ENCODE measurements at regions of chr17 and their contacts with region 1.

Region 1: DNA sequence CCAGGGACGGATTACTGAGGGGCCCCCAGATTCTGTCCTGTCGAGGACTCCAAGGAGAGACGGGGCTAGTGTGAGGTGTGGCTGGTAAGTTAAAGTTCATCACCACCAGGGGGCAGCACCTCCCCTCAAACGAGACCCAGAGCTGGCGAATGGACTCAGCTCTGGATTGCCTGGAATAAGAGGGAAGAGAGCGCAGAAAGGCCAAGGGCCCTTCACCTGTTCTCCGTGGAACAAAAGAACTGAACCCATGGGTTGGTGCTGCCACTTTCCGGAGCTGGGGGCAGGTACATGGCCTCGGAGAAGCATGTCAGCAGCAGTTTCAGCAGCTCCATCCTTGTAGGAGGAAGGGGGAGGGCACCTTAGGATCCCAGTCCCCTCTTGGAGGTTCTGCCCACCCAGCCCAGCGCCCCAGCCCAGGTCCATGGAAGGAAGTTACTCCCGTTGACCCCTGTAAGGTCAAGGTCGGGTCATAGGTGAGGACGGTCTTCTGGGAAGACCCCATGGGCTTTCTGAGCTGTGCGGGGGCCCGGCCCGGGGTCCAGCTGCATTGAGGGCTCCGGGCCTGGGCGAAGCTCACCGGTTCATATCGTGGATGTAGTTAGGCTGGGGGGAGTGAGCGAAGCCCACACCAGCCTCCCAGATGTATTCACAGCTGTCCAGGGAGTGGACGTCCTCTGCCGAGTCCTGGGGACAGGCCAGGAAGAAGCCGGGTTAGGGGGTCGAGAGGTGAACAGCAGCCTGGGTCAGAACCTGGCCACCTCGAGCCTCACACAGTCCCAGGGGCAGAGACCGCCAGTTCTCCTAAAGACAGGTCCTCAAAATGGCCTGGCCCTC is 10.7 kb downstream of the HID1 start:
- DNase-seq: no peak
- ATAC-seq: peak; percentile 86
- H3K4me3 ChIP-seq: no peak overlapping the region
- H3K27ac ChIP-seq: no peak overlapping the region
- H3K4me1 ChIP-seq: no peaks in the 10 kb centered on the region; the same call in 1 of the 2 replicates
- H3K27me3 ChIP-seq: no peaks in the 10 kb centered on the region
- CTCF ChIP-seq: peak; percentile 62 to 83 (median 72)
- EP300 ChIP-seq: no peak
- POLR2A ChIP-seq: no peak
- RAD21 ChIP-seq: peak; percentile 75

Region 2: DNA sequence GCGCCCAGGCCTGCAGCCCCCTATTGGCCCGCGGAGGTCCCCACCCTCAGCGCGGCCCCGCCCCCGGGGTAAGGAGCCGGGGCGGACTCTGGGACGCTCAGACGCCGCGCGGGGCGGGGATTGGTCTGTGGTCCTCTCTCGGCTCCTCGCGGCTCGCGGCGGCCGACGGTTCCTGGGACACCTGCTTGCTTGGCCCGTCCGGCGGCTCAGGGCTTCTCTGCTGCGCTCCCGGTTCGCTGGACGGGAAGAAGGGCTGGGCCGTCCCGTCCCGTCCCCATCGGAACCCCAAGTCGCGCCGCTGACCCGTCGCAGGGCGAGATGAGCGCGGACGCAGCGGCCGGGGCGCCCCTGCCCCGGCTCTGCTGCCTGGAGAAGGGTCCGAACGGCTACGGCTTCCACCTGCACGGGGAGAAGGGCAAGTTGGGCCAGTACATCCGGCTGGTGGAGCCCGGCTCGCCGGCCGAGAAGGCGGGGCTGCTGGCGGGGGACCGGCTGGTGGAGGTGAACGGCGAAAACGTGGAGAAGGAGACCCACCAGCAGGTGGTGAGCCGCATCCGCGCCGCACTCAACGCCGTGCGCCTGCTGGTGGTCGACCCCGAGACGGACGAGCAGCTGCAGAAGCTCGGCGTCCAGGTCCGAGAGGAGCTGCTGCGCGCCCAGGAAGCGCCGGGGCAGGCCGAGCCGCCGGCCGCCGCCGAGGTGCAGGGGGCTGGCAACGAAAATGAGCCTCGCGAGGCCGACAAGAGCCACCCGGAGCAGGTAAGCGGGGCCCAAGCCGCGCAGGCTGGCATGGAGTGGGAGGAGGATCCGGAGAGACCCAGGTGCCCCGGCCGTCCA is 213.1 kb before region 1 on chr17 and contains the start of gene NHERF1:
- CTCF ChIA-PET with region 1: interaction called, 26 read pairs
- POLR2A ChIA-PET with region 1: no interaction called
- RAD21 ChIA-PET with region 1: interaction called, 7 read pairs
- SMC1A ChIA-PET with region 1: interaction called, 6 read pairs
- in situ Hi-C with region 1: no loop called
- intact Hi-C with region 1: no loop called
- DNase-seq: peak; percentile 60
- ATAC-seq: peak; percentile 96
- H3K4me3 ChIP-seq: peak within 1 kb of the TSS; percentile 96
- H3K27ac ChIP-seq: peak within 1 kb of the TSS; percentile 64
- H3K4me1 ChIP-seq: peaks cover 6% of the 10 kb centered on the region
- H3K27me3 ChIP-seq: no peaks in the 10 kb centered on the region
- CTCF ChIP-seq: peak; percentile 10 to 19 (median 14); a peak in 1 of 6 replicates
- EP300 ChIP-seq: no peak
- POLR2A ChIP-seq: peak; percentile 99
- RAD21 ChIP-seq: no peak
- polyA plus RNA-seq, gene NHERF1: 13.4 to 14.3 TPM

Region 3: DNA sequence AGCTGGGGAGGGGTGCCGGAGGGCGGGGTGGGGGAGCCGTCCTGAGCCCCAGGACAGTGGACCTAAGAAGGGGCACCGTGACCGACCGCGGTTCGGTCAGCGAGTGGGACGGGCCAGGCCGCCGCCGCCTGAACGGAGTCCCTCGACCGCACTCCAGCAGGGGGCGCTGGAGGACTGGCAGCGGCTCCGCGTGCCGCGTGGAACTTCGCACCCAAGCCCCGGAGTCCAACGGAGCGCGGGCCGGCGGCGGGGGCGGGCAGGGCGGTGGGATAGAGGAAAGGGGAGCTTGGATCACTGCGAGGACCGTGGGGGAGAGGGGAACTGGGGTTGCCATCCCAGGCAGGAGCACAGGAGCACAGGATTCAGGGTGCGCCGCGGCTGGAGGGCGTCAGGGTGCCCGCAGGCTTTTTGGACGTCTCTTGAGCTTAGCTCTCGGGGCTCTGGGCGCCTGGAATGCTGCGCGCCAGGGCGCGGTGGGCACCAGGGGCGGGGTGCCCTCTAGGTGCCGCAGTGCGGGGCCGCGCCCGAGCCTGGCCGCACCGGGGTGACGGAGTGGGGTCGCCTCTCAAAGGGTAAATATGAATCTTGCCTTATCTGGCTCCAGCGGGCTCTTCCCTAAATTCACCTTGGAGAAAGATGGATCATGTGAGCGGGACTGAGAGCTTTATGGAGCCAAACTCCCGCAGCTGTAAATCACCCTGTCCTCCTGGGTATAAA is 38.2 kb before region 1 on chr17:
- CTCF ChIA-PET with region 1: interaction called, 274 read pairs
- POLR2A ChIA-PET with region 1: no interaction called
- RAD21 ChIA-PET with region 1: interaction called, 73 read pairs
- SMC1A ChIA-PET with region 1: interaction called, 73 read pairs
- in situ Hi-C with region 1: loop called (anchors 5 kb)
- intact Hi-C with region 1: loop called (anchors 1 kb)
- DNase-seq: no peak
- ATAC-seq: peak; percentile 88
- H3K4me3 ChIP-seq: no peak overlapping the region
- H3K27ac ChIP-seq: no peak overlapping the region
- H3K4me1 ChIP-seq: no peaks in the 10 kb centered on the region
- H3K27me3 ChIP-seq: peaks cover 11 to 16% of the 10 kb centered on the region in 2 experiments
- CTCF ChIP-seq: peak; percentile 45 to 91 (median 88)
- EP300 ChIP-seq: no peak
- POLR2A ChIP-seq: no peak
- RAD21 ChIP-seq: peak; percentile 84

Region 4: DNA sequence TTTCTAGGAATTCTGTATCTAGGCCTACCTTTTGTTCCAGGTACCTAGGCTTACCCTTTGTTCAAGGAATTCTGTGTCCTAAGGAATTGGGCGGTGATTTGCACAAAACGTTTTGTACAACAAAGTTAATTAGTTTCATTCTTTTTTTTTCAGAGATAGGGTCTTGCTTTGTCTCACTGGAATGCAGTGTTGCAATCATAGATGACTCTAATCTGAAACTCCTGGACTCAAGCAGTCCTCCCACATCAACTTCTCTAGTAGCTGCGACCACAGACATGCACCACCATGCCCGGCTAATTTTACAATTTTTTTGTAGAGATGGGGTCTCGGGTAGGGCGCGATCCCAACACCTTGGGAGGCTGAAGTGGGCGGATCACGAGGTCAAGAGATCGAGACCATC is 32.6 kb after region 1 on chr17:
- CTCF ChIA-PET with region 1: interaction called, 21 read pairs
- POLR2A ChIA-PET with region 1: no interaction called
- RAD21 ChIA-PET with region 1: interaction called, 8 read pairs
- SMC1A ChIA-PET with region 1: interaction called, 7 read pairs
- in situ Hi-C with region 1: no loop called
- intact Hi-C with region 1: no loop called
- DNase-seq: no peak
- ATAC-seq: no peak
- H3K4me3 ChIP-seq: no peak overlapping the region
- H3K27ac ChIP-seq: no peak overlapping the region
- H3K4me1 ChIP-seq: no peaks in the 10 kb centered on the region
- H3K27me3 ChIP-seq: peaks cover 0 to 3% of the 10 kb centered on the region in 2 experiments; a peak in 1 of 4 replicates
- CTCF ChIP-seq: no peak
- EP300 ChIP-seq: no peak
- POLR2A ChIP-seq: no peak
- RAD21 ChIP-seq: no peak

Region 5: DNA sequence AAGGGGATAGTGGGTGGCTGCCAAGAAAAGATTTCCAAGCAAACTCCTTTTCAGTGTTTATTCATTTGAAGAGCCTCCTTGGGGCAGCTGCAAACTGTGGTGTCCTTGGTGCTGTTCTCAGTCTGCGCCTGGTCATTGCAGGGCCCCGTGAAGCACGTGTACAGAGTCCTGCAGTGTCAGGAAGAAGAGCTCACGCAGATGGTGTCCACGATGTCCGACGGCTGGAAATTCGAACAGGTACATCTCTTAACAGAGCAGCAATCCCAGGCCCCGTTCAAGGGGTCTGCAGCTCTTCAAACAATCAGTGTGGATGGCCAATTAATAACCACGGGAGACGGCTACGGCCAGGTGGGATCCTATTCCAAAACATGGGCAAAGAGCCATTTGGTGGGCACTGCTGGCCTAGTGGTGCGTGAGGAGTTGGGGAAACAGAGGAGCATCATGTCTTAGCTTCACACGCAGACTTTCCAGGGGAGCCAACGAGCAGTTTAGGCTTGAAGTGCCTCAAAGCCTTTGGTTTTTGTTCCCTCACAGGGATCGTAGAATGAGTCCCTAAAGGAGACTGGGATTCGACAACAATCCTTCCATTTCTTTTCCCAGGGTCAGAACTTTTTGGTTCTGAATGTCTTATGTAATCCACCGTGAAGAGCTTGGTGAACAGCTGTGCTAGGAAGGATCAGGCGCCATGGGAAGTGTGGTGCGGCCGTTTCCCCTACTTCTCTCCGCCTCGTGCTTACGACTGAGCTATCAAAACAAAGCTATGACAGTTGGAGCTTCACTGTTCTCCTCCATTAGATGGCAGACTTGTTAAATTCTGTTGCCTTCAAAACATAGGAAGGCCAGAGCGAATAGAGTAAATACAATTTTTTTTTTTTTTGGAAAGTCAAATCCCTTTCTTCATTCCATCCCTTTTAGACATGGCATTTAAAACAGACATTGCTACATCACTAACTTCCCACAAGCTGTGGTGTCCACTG is 97.8 kb after region 1 on chr17:
- CTCF ChIA-PET with region 1: interaction called, 23 read pairs
- POLR2A ChIA-PET with region 1: no interaction called
- RAD21 ChIA-PET with region 1: interaction called, 4 read pairs
- SMC1A ChIA-PET with region 1: interaction called, 7 read pairs
- in situ Hi-C with region 1: no loop called
- intact Hi-C with region 1: no loop called
- DNase-seq: no peak
- ATAC-seq: no peak
- H3K4me3 ChIP-seq: no peak overlapping the region
- H3K27ac ChIP-seq: no peak overlapping the region
- H3K4me1 ChIP-seq: no peaks in the 10 kb centered on the region
- H3K27me3 ChIP-seq: no peaks in the 10 kb centered on the region
- CTCF ChIP-seq: peak in 2 of 3 experiments; percentile 19 to 34; a peak in 2 of 6 replicates
- EP300 ChIP-seq: no peak
- POLR2A ChIP-seq: no peak
- RAD21 ChIP-seq: peak; percentile 38; the same call in 1 of the 2 replicates

Region 6: GRCh38 chr17:75131280-75132017 is 169.6 kb after region 1 on chr17 and contains the start of gene NT5C:
- CTCF ChIA-PET with region 1: interaction called, 33 read pairs
- POLR2A ChIA-PET with region 1: interaction called, 3 read pairs
- RAD21 ChIA-PET with region 1: interaction called, 30 read pairs
- SMC1A ChIA-PET with region 1: interaction called, 8 read pairs
- in situ Hi-C with region 1: no loop called
- intact Hi-C with region 1: loop called (anchors 5 kb)
- DNase-seq: no peak
- ATAC-seq: peak; percentile 96
- H3K4me3 ChIP-seq: peak within 1 kb of the TSS; percentile 74
- H3K27ac ChIP-seq: peak within 1 kb of the TSS; percentile 82
- H3K4me1 ChIP-seq: peaks cover 14% of the 10 kb centered on the region
- H3K27me3 ChIP-seq: no peaks in the 10 kb centered on the region
- CTCF ChIP-seq: peak; percentile 72 to 74 (median 74); a peak in 5 of 6 replicates
- EP300 ChIP-seq: no peak; a peak in 1 of 4 replicates
- POLR2A ChIP-seq: peak; percentile 96
- RAD21 ChIP-seq: peak; percentile 34; the same call in 1 of the 2 replicates
- polyA plus RNA-seq, gene NT5C: 3.7 to 9.8 TPM

Region 7: GRCh38 chr17:75205037-75205792 is 243.3 kb after region 1 on chr17 and contains the start of gene NUP85:
- CTCF ChIA-PET with region 1: interaction called, 224 read pairs
- POLR2A ChIA-PET with region 1: interaction called, 7 read pairs
- RAD21 ChIA-PET with region 1: interaction called, 127 read pairs
- SMC1A ChIA-PET with region 1: interaction called, 74 read pairs
- in situ Hi-C with region 1: loop called (anchors 5 kb)
- intact Hi-C with region 1: loop called (anchors 1 kb)
- DNase-seq: peak; percentile 66
- ATAC-seq: peak; percentile 91
- H3K4me3 ChIP-seq: peak within 1 kb of the TSS; percentile 77
- H3K27ac ChIP-seq: peak within 1 kb of the TSS; percentile 98
- H3K4me1 ChIP-seq: no peaks in the 10 kb centered on the region; the same call in 1 of the 2 replicates
- H3K27me3 ChIP-seq: no peaks in the 10 kb centered on the region
- CTCF ChIP-seq: no peak
- EP300 ChIP-seq: peak in 1 of 2 experiments; percentile 45; a peak in 1 of 4 replicates
- POLR2A ChIP-seq: peak; percentile 93
- RAD21 ChIP-seq: no peak
- polyA plus RNA-seq, gene NUP85: 127 to 135 TPM

Region 8: GRCh38 chr17:76072148-76072858 is 1110.4 kb after region 1 on chr17 and contains the start of gene SRP68:
- CTCF ChIA-PET with region 1: no interaction called
- POLR2A ChIA-PET with region 1: no interaction called
- RAD21 ChIA-PET with region 1: no interaction called
- SMC1A ChIA-PET with region 1: no interaction called
- in situ Hi-C with region 1: no loop called
- intact Hi-C with region 1: no loop called
- DNase-seq: peak; percentile 59
- ATAC-seq: peak; percentile 99
- H3K4me3 ChIP-seq: peak within 1 kb of the TSS; percentile 76
- H3K27ac ChIP-seq: peak within 1 kb of the TSS; percentile 81
- H3K4me1 ChIP-seq: peaks cover 3% of the 10 kb centered on the region; the same call in 1 of the 2 replicates
- H3K27me3 ChIP-seq: peaks cover 4 to 24% of the 10 kb centered on the region in 2 experiments; a peak in 3 of 4 replicates
- CTCF ChIP-seq: no peak
- EP300 ChIP-seq: no peak
- POLR2A ChIP-seq: peak; percentile 92
- RAD21 ChIP-seq: no peak
- polyA plus RNA-seq, gene SRP68: 29.5 to 41.9 TPM

Region 9: DNA sequence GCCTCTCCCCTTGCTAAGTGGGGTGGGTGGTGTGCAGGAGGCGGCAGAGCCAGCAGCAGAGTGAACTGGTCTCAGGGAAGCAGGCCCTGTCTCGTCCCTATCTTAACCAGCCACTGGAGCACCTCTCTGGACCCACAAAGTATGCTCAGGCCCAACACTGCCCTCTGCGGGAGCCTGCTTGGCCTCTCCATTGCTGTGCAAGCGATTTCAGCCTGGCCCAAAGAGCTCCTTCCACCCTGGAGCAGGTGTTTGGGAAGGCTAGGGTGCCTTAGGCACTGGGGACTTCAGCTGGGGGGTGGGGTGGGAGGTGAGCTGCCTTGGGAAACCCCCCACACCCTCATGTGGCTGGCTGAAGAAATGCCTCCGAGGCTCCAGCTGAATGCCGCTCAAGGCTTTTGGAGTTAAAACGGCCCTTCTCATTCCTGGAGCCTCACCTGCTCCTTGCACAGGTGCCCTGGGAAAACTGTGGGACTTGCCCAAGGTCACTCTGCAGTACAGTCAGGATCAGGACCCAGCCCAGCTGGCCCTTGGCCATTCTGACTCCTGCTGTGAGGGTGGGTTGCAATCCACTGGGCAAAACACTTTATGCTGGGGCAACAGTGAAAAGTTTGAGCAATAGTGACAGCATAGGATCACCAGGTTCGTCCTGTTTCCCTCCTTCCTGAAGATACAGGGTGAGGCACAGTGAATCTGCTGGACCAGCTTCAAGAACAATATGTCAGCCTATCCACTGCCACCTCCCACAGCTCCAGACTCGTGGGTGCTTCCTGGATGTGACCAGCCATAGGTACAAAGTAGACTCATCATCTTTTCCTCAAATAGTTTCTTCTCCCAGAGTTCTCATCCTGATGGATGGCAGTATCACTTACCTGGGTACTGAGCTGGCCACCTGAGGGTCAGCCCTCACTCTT is 1497.0 kb after region 1 on chr17:
- CTCF ChIA-PET with region 1: no interaction called
- POLR2A ChIA-PET with region 1: no interaction called
- RAD21 ChIA-PET with region 1: no interaction called
- SMC1A ChIA-PET with region 1: no interaction called
- in situ Hi-C with region 1: no loop called
- intact Hi-C with region 1: no loop called
- DNase-seq: no peak
- ATAC-seq: peak; percentile 96
- H3K4me3 ChIP-seq: no peak overlapping the region
- H3K27ac ChIP-seq: no peak overlapping the region
- H3K4me1 ChIP-seq: no peaks in the 10 kb centered on the region
- H3K27me3 ChIP-seq: no peaks in the 10 kb centered on the region
- CTCF ChIP-seq: peak; percentile 67 to 79 (median 75)
- EP300 ChIP-seq: no peak
- POLR2A ChIP-seq: no peak
- RAD21 ChIP-seq: peak; percentile 74